ENCODE measurements at regions of chr4 and their contacts with region 1.

Region 1: DNA sequence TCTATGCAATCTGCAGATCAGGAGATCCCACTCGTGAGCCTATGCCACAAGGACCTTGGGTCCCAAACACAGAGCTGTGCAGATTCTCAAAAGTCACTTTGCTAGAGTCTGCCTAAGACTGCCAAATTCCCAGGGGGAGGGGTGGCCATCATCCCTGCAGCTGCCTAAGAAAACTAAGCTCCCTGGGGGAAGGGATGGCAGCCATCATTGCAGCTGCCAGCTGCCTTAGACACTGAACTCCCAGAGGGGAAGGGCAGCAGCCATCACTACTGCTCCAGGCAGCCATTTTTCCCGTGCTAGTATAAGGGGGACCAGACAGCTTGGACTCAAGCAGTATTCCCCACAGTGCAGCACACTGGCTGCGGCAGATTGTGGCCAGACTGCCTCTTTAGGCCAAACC is 156.9 kb downstream of the NKX6-1 start:
- DNase-seq: no peak
- H3K4me3 ChIP-seq: no peak overlapping the region
- H3K27ac ChIP-seq: no peak overlapping the region
- H3K4me1 ChIP-seq: no peaks in the 10 kb centered on the region
- H3K27me3 ChIP-seq: no peaks in the 10 kb centered on the region
- CTCF ChIP-seq: no peak
- EP300 ChIP-seq: no peak
- POLR2A ChIP-seq: no peak

Region 2: GRCh38 chr4:84022564-84022963 is 319.6 kb before region 1 on chr4:
- intact Hi-C with region 1: no loop called
- DNase-seq: no peak
- H3K4me3 ChIP-seq: no peak overlapping the region
- H3K27ac ChIP-seq: no peak overlapping the region
- H3K4me1 ChIP-seq: no peaks in the 10 kb centered on the region
- H3K27me3 ChIP-seq: no peaks in the 10 kb centered on the region
- CTCF ChIP-seq: no peak
- EP300 ChIP-seq: no peak
- POLR2A ChIP-seq: no peak

Region 3: GRCh38 chr4:84441758-84442377 is 99.7 kb after region 1 on chr4:
- intact Hi-C with region 1: loop called in 1 of 4 experiments (anchors 5 kb)
- DNase-seq: no peak
- H3K4me3 ChIP-seq: no peak overlapping the region
- H3K27ac ChIP-seq: no peak overlapping the region
- H3K4me1 ChIP-seq: no peaks in the 10 kb centered on the region
- H3K27me3 ChIP-seq: no peaks in the 10 kb centered on the region
- CTCF ChIP-seq: no peak
- EP300 ChIP-seq: no peak
- POLR2A ChIP-seq: no peak